ENCODE measurements at regions of chr2 and their contacts with region 1.

Region 1: DNA sequence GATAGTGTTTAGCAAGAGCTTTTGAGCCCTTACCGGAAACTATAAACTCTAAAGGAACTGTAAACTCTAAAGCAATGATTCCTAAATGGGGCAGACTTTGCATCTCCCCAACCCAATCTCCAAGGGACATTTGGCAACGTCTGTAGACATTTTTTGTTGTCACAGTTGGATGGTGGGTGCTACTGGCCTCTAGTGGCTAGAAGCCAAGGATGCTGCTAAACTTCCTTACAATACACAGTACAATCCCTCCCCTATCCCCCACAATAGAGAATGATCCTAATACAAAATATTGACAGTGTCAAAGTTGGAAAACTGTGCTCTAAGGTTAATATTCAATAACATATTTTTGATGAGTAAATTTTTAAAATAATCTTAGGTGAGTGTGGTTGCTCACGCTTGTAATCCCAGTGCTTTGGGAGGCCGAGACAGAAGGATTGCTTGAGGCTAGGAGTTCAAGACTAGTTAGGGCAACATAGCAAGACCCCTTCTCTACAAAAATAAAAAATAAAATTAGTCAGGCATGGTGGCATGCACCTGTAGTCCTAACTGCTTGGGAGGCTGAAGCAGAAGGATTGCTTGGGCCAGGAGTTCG is 66.7 kb downstream of the PTPN4 start:
- DNase-seq: no peak
- H3K4me3 ChIP-seq: no peak overlapping the region
- CTCF ChIP-seq: peak; percentile 57

Region 2: DNA sequence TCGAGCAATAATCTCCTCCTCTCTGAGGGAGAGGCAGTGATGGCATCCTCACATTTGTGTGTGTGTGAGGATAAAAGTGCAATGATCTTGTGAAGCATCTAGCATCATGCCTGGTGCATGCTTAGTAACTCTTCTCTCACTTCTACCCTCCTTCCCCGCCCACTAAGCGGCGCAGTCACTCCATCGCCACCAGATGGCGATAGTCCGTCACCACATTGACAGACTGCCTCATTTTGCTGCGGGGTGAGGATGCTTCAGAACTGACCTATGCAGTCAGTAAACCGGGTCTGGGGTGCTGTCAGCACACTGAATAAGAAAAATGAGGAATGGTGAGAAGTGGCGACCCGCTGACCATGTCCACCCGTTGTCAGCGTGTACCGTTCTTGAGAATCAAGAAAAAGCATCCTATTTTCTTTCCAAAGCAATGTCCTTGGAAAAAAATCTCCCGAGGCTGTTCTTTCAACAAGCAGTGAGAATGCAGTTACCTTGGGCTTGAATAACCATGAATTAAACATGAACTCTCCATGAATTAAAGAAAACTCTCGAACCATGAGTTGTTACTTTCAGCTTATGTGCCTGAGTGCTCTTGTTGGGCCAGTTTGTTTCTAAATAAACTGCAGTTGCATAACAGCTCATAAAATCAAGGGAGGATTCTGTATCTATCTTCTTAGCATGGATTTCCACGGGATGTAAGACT is 184.8 kb before region 1 on chr2:
- CTCF ChIA-PET with region 1: interaction called, 14 read pairs
- POLR2A ChIA-PET with region 1: no interaction called
- DNase-seq: no peak
- H3K4me3 ChIP-seq: no peak overlapping the region
- CTCF ChIP-seq: peak; percentile 98

Region 3: DNA sequence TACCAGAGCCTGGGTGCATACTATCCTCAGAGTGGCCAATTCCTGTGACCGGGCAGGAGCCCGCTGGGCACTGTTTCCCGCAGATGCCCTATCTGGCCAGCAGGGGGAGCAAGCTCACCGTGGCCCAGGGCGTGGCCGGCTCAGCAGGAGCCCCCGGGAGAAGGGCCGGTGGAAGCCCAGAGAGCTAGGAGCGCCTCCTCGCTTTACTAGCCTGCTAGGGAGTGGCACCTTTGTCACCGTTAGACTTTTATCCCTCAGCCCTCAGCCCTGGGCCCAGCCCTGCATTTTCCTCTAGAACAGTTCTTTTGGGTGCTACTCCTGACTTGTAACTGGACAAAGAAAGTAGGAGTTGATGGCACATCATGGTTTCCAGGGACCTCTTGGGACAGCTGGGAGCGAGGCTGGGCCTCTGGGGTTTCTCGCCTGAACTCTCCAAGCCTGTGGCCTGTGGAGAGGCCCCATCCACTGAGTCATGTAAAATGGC is 123.5 kb before region 1 on chr2:
- CTCF ChIA-PET with region 1: interaction called, 56 read pairs
- POLR2A ChIA-PET with region 1: no interaction called
- DNase-seq: no peak
- H3K4me3 ChIP-seq: no peak overlapping the region
- CTCF ChIP-seq: peak; percentile 99

Region 4: GRCh38 chr2:119753041-119753929 is 73.2 kb before region 1 on chr2:
- CTCF ChIA-PET with region 1: interaction called, 30 read pairs
- POLR2A ChIA-PET with region 1: no interaction called
- DNase-seq: no peak
- H3K4me3 ChIP-seq: no peak overlapping the region
- CTCF ChIP-seq: peak; percentile 65

Region 5: DNA sequence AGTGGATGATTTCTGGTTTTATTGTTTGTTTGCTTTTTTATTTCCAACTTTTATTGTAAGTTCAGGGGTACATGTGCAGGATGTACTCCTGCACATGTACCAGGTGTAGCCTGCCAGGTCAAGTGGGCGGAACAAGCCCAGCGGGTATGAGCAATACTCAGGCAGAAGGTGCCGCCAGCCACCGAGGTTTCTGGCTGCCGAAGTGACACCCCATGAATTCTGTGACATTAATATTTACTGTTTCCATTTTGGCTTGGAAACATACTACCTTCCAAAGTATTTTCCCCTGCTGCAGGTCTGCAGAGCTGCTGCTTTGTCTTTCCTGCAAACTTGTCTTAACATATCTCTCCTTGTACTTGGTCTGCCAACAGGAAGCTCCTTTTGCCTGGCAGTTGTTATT is 11.7 kb after region 1 on chr2:
- CTCF ChIA-PET with region 1: interaction called, 10 read pairs
- POLR2A ChIA-PET with region 1: no interaction called
- DNase-seq: no peak
- H3K4me3 ChIP-seq: no peak overlapping the region
- CTCF ChIP-seq: no peak

Measured in AG04449 (cell line).